WTC11 (cell line): ENCODE measurements at regions of chr2 and their contacts with region 1.

Region 1: DNA sequence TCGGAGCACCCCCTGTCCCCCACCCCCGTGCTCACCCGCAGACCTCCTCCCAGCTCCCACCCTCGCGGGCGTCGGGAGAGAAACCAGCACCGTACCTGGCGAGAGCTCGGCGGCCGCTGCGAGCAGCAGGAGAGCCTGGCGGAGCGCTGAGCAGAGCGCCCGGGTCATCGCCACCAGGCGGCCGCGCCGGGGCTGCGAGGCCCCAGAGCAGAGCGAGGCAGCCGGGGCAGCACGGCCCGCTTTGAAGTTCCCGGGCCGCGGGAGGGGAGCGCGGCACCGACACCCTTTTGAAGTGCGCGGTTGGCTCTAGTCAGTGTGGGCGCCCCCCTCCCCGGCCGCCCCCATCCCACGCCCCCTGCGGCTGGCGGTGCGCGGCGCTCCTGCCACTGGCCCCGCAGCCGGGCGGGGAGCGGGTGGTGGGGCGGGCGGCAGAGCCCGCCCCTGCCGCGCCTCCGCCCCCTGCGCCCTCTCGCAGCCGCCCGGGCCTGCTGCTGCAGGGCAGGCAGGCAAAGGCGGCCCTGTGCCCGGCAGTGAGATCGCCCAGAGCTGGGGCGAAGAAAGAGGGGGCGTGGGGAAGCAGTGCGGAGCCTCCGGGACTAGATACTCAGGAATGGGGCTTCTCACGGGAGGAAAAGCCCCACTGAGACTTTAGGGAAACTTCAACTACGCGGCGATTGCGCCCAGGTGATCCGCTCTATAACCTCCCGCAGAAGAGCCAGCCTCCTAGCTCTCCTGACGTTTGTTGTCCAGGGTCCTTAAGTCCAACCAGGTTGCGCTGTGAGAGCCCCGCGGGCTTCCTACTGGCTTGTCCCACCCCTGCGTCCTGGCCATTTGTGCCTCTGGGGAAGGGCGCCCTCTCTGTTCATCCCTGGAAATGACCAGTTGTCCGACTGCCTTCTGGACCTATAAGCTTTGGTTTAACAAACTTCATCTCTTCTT is at the start of gene ACVR1C:
- DNase-seq: peak; percentile 92
- ATAC-seq: peak; percentile 93
- H3K4me3 Mint-ChIP-seq: peak within 1 kb of the TSS; percentile 80
- H3K27ac Mint-ChIP-seq: no peak within 1 kb of the TSS
- H3K4me1 Mint-ChIP-seq: peaks cover 7% of the 10 kb centered on the region; the same call in 1 of the 2 replicates
- H3K27me3 Mint-ChIP-seq: peaks cover 64% of the 10 kb centered on the region
- CTCF ChIP-seq: peak; percentile 75
- total RNA-seq, gene ACVR1C: 1.1 to 1.6 TPM (median 1.2 TPM) in 3 replicates

Region 2: GRCh38 chr2:157492189-157492773 is 136.5 kb before region 1 on chr2:
- CTCF ChIA-PET with region 1: interaction called, 17 read pairs
- POLR2A ChIA-PET with region 1: interaction called, 7 read pairs
- DNase-seq: peak; percentile 74
- ATAC-seq: peak; percentile 94
- H3K4me3 Mint-ChIP-seq: no peak overlapping the region
- H3K27ac Mint-ChIP-seq: no peak overlapping the region
- H3K4me1 Mint-ChIP-seq: 0 out of 2 replicates have a peak, but pooled peaks cover 4% of the 10 kb centered on the region
- H3K27me3 Mint-ChIP-seq: no peaks in the 10 kb centered on the region
- CTCF ChIP-seq: peak; percentile 62; the same call in 1 of the 2 replicates

Region 3: GRCh38 chr2:157603198-157603597 is 25.5 kb before region 1 on chr2:
- CTCF ChIA-PET with region 1: interaction called, 41 read pairs
- POLR2A ChIA-PET with region 1: interaction called, 3 read pairs
- DNase-seq: no peak
- ATAC-seq: no peak
- H3K4me3 Mint-ChIP-seq: no peak overlapping the region
- H3K27ac Mint-ChIP-seq: no peak overlapping the region
- H3K4me1 Mint-ChIP-seq: no peaks in the 10 kb centered on the region
- H3K27me3 Mint-ChIP-seq: peaks cover 21% of the 10 kb centered on the region
- CTCF ChIP-seq: no peak

Region 4: DNA sequence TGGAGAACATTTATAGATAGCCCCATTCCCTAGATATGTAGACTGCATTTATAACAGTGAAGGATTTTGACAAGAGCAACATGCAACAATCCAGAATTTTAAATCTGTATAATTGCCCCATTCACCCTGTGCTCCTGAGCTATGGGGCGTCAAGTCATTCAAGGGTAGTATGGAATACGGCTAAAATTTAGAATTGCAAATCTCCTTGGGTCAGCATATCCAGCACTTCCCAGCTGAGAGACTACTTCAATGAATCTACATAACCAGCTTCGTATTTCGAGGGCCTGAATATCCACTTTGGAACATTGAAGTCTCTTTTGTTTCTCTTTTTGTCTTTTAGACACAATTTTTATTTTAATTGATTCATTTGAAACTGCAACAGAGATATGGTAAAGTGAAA is 28.4 kb after region 1 on chr2:
- CTCF ChIA-PET with region 1: interaction called, 12 read pairs
- POLR2A ChIA-PET with region 1: no interaction called
- DNase-seq: no peak
- ATAC-seq: peak; percentile 44; the same call in 1 of the 2 replicates
- H3K4me3 Mint-ChIP-seq: no peak overlapping the region
- H3K27ac Mint-ChIP-seq: no peak overlapping the region
- H3K4me1 Mint-ChIP-seq: peaks cover 12% of the 10 kb centered on the region
- H3K27me3 Mint-ChIP-seq: peaks cover 28% of the 10 kb centered on the region
- CTCF ChIP-seq: no peak

Region 5: GRCh38 chr2:157901325-157901724 is 272.6 kb after region 1 on chr2:
- CTCF ChIA-PET with region 1: interaction called, 10 read pairs
- POLR2A ChIA-PET with region 1: no interaction called
- DNase-seq: no peak
- ATAC-seq: peak; percentile 76
- H3K4me3 Mint-ChIP-seq: no peak overlapping the region
- H3K27ac Mint-ChIP-seq: no peak overlapping the region
- H3K4me1 Mint-ChIP-seq: peaks cover 24% of the 10 kb centered on the region
- H3K27me3 Mint-ChIP-seq: peaks cover 16% of the 10 kb centered on the region
- CTCF ChIP-seq: no peak